A549 (cell line): ENCODE measurements at regions of chr6 and their contacts with region 1.

Region 1: DNA sequence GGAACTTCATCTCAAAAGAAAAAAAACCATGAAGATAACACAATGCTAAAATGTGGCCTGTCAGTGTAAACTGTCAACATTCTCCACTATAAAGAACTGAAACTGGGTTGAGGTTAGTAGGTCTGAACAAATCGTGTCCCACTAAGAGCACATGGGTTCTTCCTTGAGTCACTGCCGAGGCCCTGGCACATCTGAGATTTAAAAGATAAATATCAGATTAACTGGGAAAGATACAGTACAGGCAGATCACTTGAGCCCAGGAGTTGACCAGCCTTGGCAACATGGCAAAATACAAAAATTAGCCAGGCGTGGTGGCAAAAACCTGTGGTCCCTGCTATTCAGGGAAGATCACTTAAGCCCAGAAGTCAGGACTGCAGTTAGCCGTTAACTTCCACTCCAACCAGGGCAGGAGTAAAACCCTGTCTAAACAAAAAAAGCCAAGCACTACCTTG is 5.6 kb downstream of the EEF1A1 start:
- DNase-seq: no peak
- ATAC-seq: peak in 1 of 2 experiments; percentile 4; a peak in 1 of 6 replicates
- H3K4me3 ChIP-seq: peak overlapping the region; percentile 44; the same call in 2 of the 3 replicates
- H3K27ac ChIP-seq: peak overlapping the region; percentile 29 to 80; a peak in 4 of 6 replicates
- H3K4me1 ChIP-seq: peaks cover 27% of the 10 kb centered on the region
- CTCF ChIP-seq: no peak
- EP300 ChIP-seq: no peak
- POLR2A ChIP-seq: no peak
- RAD21 ChIP-seq: no peak

Region 2: GRCh38 chr6:73580247-73581149 is 65.3 kb after region 1 on chr6:
- CTCF ChIA-PET with region 1: interaction called, 24 read pairs
- POLR2A ChIA-PET with region 1: interaction called, 115 read pairs
- DNase-seq: peak; percentile 77 to 96
- ATAC-seq: peak; percentile 95 to 97
- H3K4me3 ChIP-seq: peak overlapping the region; percentile 34
- H3K27ac ChIP-seq: peak overlapping the region; percentile 93 to 98
- H3K4me1 ChIP-seq: peaks cover 42% of the 10 kb centered on the region
- CTCF ChIP-seq: peak; percentile 39
- EP300 ChIP-seq: peak; percentile 58 to 84; a peak in 3 of 5 replicates
- POLR2A ChIP-seq: no peak
- RAD21 ChIP-seq: peak; percentile 46 to 51; a peak in 4 of 5 replicates

Region 3: DNA sequence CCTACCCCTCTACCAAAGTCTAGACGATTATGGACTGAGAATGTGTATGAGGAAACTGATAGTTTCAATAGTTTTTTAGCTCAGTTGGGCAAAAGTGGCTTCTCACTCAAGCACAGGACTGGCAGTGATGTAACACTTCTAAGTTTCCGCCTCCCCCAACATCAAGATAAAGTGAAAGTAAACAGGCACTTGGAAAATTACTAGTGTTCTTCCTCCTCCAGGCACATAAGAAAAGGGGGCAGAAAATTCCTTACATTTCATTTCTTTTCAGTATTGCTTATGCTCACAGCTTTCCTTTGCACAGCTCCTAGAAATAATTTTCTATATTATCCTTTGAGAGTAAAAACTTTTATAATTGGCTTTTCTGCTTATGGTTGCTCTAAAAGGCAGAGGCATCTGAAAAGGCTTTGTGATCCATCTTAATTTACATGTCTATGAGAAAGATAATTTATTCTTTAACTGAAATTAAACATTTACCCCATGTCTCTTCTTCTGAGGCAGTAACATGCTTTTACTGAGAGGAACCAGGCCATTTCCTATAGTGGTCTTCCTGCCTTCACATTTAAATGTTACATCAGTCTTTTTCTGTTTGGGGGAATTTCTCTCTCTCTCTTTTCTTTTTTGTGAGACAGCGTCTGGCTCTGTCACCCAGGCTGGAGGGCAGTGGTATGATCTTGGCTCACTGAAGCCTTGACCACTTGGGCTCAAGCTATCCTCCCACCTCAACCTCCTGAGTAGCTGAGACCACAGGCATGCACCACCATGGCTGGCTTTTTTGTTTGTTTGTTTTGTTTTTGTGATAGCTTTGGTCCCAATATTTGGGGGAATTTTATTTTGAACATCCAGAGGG is 70.6 kb after region 1 on chr6:
- CTCF ChIA-PET with region 1: interaction called, 24 read pairs
- POLR2A ChIA-PET with region 1: interaction called, 115 read pairs
- DNase-seq: peak; percentile 48 to 81
- ATAC-seq: peak; percentile 77 to 81
- H3K4me3 ChIP-seq: peak overlapping the region; percentile 5; the same call in 2 of the 3 replicates
- H3K27ac ChIP-seq: peak overlapping the region; percentile 93 to 98
- H3K4me1 ChIP-seq: peaks cover 35% of the 10 kb centered on the region
- CTCF ChIP-seq: no peak
- EP300 ChIP-seq: peak in 1 of 2 experiments; percentile 41; a peak in 1 of 5 replicates
- POLR2A ChIP-seq: no peak
- RAD21 ChIP-seq: 0 out of 5 replicates have a peak, but pooled peaks of 1 of the 2 experiments have one; percentile 6

Region 4: DNA sequence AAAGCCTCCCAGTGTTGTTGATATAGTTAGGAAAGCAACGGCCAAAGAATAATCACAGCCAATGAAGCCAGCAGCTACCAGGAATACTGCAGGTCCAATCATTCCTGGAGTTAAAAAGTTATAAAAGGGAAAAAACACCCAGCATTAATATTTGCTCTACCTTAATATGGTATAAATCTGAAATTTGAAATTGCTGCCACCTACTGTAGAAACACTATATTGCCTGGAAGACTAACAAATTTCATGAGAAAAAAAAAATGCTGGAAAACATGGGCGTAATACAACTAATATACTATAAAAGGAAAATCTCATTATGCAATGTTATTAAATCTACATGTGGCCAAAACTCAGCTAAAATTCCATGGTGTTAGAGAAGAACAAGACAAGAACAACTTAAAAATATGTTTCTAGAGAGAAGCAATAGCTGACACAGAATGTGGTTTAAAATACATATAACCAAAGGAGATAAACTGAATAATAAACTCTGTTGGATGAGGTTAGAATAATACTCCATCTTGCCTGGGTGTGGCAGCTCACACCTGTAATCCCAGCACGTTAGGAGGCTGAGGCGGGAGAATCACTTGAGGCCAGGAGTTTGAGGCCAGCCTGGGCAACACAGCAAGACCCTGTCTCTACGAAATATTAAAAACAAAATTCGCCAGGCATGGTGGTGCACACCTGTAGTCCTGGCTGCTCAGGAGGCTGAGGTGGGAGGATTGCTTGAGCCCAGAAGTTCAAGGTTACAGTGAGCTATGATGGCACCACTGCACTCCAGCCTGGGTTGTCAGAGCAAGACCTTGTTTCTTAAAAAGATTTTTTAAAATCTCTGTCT is 95.4 kb after region 1 on chr6:
- CTCF ChIA-PET with region 1: interaction called, 40 read pairs
- POLR2A ChIA-PET with region 1: interaction called, 15 read pairs
- DNase-seq: peak in 1 of 2 experiments; percentile 38
- ATAC-seq: peak in 1 of 2 experiments; percentile 73; a peak in 3 of 6 replicates
- H3K4me3 ChIP-seq: no peak overlapping the region
- H3K27ac ChIP-seq: peak overlapping the region; percentile 57 to 67; a peak in 5 of 6 replicates
- H3K4me1 ChIP-seq: 0 out of 3 replicates have a peak, but pooled peaks cover 14% of the 10 kb centered on the region
- CTCF ChIP-seq: peak; percentile 60
- EP300 ChIP-seq: no peak
- POLR2A ChIP-seq: no peak
- RAD21 ChIP-seq: peak; percentile 70 to 77

Region 5: DNA sequence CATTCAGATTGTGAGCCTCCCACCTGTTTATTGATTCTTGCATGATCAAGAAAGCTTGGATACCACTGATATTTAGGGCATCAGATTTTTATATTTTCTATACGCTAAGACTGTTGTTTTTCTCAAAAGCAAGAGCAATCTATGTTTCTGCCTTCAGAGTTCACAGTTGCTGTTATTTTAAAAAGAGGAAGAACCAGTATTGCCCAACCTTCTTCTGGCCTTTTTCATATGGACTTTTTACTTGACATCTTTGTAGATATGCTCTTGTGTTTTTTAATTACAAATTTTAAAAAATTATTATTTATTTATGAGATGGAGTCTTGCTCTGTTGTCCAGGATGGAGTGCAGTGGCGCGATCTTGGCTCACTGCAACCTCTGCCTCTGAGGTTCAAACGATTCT is 109.7 kb after region 1 on chr6:
- CTCF ChIA-PET with region 1: no interaction called
- POLR2A ChIA-PET with region 1: no interaction called
- DNase-seq: no peak
- ATAC-seq: no peak
- H3K4me3 ChIP-seq: no peak overlapping the region
- H3K27ac ChIP-seq: no peak overlapping the region
- H3K4me1 ChIP-seq: no peaks in the 10 kb centered on the region
- CTCF ChIP-seq: no peak
- EP300 ChIP-seq: no peak
- POLR2A ChIP-seq: no peak
- RAD21 ChIP-seq: no peak

Region 6: DNA sequence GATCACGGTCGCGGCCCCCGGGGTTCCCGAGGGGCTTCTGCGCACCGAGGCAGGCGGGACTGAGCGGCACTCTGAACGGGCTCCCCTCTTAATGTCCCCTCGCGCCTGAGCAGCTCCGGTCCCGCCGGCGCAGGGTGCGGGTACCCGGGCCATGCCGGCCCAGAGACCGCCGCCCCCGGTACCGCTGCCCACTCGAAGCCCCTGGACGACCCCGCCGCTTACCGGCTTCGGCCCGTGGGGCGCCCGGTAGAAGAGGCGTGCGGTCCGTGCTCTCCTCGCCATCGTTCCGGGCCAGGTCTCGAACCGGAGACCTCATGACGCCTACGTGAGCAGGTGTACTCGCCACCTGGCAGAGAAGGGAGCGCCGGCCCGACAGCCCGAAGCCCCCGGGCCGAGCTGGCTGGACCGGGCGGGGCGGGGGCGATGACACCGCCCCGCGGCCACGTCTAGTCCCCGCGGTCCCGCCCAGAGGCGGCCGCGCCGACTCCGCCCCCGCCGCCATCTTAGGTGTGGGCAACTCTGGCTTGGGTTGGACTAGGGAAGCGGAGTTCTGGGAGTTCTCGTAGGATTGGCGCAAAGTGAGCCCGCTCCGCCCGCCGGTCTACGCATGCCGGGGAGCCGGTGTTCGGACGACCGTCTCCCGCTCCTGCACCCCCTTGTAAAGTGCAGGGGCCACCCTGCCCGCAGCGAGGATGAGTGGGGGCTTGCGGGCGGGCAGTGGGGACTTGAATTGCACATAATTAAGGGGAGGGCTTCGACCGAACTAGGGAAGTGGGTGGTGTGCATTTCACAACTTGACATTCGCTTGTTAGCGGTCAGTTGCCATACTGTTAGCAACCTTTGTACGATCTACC is 138.6 kb after region 1 on chr6 and contains the start of gene SLC17A5:
- CTCF ChIA-PET with region 1: interaction called, 3 read pairs
- POLR2A ChIA-PET with region 1: interaction called, 46 read pairs
- DNase-seq: peak; percentile 87 to 89
- ATAC-seq: peak; percentile 90 to 95
- H3K4me3 ChIP-seq: peak within 1 kb of the TSS; percentile 86
- H3K27ac ChIP-seq: peak within 1 kb of the TSS; percentile 90 to 97
- H3K4me1 ChIP-seq: peaks cover 16% of the 10 kb centered on the region; the same call in 2 of the 3 replicates
- CTCF ChIP-seq: no peak
- EP300 ChIP-seq: no peak
- POLR2A ChIP-seq: peak; percentile 61
- RAD21 ChIP-seq: no peak
- polyA plus RNA-seq, gene SLC17A5: 9.6 and 10.0 TPM in 2 replicates